Activated CD4-positive, alpha-beta T cell treated with anti-CD3 and anti-CD28 coated beads, Interleukin-2, amount 10 ng/mL, durations not matched to agents 24 days and 14 days (primary cell): ENCODE measurements at regions of chr16 and their contacts with region 1.

Region 1: DNA sequence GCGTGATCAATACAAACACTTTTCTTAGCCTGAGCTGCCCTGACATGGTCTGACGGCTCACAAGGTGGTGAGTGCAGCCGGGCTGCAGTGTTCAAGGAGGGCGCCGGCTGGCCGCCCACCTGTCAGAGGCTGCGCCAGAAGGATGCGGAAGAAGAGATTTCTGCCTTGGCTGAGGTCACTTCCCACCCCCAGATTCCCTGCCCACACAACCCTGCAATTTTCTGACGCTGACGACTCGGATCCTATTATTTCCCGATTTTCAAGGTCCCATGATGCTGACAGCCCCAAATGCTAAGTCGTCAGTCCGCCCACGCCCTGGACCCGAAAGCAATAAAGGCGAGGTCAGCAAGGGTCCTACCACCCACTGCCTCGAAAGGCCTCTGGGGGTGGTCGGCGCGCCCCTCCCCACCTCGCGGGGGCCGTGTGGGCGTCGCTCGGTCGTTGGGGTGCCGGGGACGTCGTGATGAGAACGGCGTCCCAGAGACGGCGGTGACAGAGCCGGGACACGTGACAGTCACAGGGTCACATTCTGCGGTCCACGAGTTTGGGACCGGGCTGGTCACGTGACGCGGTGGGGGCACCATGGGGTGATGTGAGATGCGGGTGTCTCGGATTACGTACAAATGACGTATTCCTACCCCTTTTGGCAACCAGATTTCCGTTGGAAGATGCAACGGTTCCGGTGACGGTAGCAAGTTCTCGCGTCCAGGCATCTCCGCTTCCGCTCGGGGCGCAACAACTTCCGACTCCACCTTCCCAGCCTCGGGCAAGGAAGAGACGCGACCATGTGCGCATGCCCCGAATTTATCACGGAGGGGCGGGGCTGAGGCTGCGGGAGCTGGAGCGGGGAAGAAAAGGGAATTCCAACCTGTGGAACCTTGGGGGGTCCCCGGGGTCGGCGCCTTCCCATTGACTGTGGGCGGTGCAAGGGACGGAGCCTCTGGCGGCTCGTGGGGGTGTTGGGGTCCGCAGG is at the start of gene STX4:
- DNase-seq: peak; percentile 99
- H3K4me3 Mint-ChIP-seq: peak within 1 kb of the TSS; percentile 93
- H3K27ac Mint-ChIP-seq: peak within 1 kb of the TSS; percentile 96
- H3K4me1 Mint-ChIP-seq: peaks cover 15% of the 10 kb centered on the region
- H3K27me3 Mint-ChIP-seq: no peaks in the 10 kb centered on the region
- total RNA-seq, gene STX4: 49.1 and 54.8 TPM in 2 replicates

Region 2: GRCh38 chr16:30767767-30768415 is 265.1 kb before region 1 on chr16:
- intact Hi-C with region 1: no loop called
- DNase-seq: no peak
- H3K4me3 Mint-ChIP-seq: no peak overlapping the region
- H3K27ac Mint-ChIP-seq: no peak overlapping the region
- H3K4me1 Mint-ChIP-seq: peaks cover 13% of the 10 kb centered on the region
- H3K27me3 Mint-ChIP-seq: no peaks in the 10 kb centered on the region

Region 3: DNA sequence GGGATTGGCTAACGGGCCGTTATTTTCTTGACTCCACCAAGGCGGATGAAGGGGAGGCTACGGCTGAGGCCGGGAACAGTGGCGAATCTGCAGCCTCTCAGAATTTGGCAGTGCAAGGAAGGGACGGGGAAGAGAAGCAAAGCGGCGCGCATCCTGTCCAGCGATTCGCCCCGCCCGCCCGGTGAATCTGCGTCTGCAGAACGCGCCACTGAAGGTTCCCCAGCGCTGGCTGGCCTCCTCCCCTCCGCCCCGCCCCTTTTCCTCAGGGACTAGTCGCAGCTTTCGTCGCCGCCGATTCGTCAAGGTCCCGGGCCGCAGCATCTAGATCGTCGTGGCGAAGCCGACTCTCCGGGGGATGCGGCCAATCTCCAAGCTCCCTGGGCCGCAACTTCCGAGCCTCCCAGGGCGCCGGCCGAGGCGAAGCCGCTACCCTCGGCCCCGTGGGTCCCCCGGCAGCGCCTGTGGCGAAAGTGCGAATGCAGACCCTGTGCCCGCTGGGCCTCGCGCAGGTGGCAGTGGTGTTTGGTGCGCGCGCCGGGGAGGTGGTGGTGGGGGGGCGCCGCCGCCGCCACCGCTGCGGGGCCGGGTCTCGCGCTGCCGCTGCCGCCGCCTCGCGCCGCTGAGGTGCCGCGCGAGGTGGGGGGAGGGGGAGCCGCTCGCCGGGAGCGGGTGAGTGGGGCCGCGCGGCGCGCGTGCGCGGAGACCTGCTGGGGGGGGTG is 75.4 kb before region 1 on chr16 and contains the start of gene SETD1A:
- intact Hi-C with region 1: loop called (anchors 1 kb)
- DNase-seq: peak; percentile 99
- H3K4me3 Mint-ChIP-seq: peak within 1 kb of the TSS; percentile 94
- H3K27ac Mint-ChIP-seq: peak within 1 kb of the TSS; percentile 99
- H3K4me1 Mint-ChIP-seq: peaks cover 32% of the 10 kb centered on the region
- H3K27me3 Mint-ChIP-seq: no peaks in the 10 kb centered on the region
- total RNA-seq, gene SETD1A: 30.7 and 31.5 TPM in 2 replicates

Region 4: GRCh38 chr16:30997000-30997886 is 35.8 kb before region 1 on chr16:
- intact Hi-C with region 1: loop called (anchors 1 kb)
- DNase-seq: peak; percentile 90
- H3K4me3 Mint-ChIP-seq: peak overlapping the region; percentile 85
- H3K27ac Mint-ChIP-seq: peak overlapping the region; percentile 71
- H3K4me1 Mint-ChIP-seq: peaks cover 7% of the 10 kb centered on the region
- H3K27me3 Mint-ChIP-seq: peaks cover 1% of the 10 kb centered on the region

Region 5: DNA sequence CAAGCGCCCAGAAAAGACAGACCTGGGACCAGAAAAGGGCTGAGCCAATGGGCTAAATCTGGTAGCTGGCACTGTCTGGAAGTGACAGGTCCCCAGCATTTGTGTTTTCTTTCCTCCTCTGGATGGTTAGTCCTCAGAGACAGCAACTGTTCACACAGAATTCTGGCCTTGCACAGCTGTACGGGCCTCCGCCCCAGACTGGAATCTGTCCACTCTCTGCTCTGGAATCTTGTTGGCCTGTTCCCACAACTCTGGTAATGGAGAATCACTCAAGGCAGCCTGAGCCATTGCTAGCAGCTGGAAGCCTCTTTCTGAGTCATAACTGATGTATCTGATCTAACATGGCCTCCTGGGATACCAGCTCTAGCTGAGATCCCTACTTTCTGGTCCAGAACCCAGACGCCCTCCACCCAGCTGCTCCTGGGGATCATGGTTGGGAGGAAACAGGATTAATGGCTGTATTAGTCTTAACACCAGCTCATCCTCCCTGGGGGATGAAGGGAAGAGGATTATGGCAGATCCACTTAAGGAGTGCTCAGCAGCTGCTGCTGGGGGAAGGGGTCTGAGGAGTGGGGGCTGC is 31.9 kb after region 1 on chr16:
- intact Hi-C with region 1: no loop called
- DNase-seq: peak; percentile 66
- H3K4me3 Mint-ChIP-seq: peak overlapping the region; percentile 82
- H3K27ac Mint-ChIP-seq: peak overlapping the region; percentile 86
- H3K4me1 Mint-ChIP-seq: peaks cover 47% of the 10 kb centered on the region
- H3K27me3 Mint-ChIP-seq: no peaks in the 10 kb centered on the region

Region 6: DNA sequence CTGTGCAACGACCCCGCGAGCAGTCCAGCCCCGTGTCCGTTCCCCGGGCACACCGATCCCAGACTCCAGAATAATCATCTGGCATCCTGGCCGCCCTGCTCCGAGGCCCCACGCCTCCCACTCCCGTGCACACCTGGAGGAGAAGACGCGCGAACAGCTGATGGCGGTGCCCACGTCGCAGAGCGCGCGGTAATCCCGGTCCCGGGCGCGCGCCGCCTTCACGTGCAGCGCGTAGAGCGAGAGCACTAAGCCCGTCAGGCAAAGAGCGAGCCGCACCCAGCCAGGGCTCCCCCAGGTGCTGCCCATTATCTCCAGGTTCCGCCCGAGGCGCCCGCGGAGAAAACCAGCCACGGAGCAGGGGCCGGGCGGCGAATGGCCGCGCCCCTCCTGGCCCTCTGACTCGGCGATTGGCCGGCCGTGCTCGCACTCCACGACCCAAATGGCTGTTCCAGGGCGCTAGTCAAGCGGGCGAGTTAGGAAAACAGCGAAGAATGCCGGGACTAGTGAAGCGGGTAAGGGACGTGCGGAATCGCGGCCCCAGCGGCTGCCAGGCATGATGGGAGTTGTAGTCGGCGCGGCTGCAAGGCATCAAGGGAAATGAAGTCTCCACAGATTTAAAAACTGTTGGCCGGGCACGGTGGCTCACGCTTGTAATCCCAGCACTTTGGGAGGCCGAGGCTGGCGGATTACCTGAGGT is 61.5 kb after region 1 on chr16 and contains the start of gene VKORC1:
- intact Hi-C with region 1: loop called (anchors 1 kb)
- DNase-seq: peak; percentile 96
- H3K4me3 Mint-ChIP-seq: peak within 1 kb of the TSS; percentile 95
- H3K27ac Mint-ChIP-seq: peak within 1 kb of the TSS; percentile 94
- H3K4me1 Mint-ChIP-seq: peaks cover 23% of the 10 kb centered on the region
- H3K27me3 Mint-ChIP-seq: no peaks in the 10 kb centered on the region
- total RNA-seq, gene VKORC1: 56.2 and 59.1 TPM in 2 replicates

Region 7: GRCh38 chr16:31117391-31118197 is 84.6 kb after region 1 on chr16 and contains the start of gene KAT8:
- intact Hi-C with region 1: loop called (anchors 1 kb)
- DNase-seq: peak; percentile 99
- H3K4me3 Mint-ChIP-seq: peak within 1 kb of the TSS; percentile 88
- H3K27ac Mint-ChIP-seq: peak within 1 kb of the TSS; percentile 89
- H3K4me1 Mint-ChIP-seq: peaks cover 11% of the 10 kb centered on the region
- H3K27me3 Mint-ChIP-seq: no peaks in the 10 kb centered on the region
- total RNA-seq, gene KAT8: 56.9 and 63.3 TPM in 2 replicates

Region 8: DNA sequence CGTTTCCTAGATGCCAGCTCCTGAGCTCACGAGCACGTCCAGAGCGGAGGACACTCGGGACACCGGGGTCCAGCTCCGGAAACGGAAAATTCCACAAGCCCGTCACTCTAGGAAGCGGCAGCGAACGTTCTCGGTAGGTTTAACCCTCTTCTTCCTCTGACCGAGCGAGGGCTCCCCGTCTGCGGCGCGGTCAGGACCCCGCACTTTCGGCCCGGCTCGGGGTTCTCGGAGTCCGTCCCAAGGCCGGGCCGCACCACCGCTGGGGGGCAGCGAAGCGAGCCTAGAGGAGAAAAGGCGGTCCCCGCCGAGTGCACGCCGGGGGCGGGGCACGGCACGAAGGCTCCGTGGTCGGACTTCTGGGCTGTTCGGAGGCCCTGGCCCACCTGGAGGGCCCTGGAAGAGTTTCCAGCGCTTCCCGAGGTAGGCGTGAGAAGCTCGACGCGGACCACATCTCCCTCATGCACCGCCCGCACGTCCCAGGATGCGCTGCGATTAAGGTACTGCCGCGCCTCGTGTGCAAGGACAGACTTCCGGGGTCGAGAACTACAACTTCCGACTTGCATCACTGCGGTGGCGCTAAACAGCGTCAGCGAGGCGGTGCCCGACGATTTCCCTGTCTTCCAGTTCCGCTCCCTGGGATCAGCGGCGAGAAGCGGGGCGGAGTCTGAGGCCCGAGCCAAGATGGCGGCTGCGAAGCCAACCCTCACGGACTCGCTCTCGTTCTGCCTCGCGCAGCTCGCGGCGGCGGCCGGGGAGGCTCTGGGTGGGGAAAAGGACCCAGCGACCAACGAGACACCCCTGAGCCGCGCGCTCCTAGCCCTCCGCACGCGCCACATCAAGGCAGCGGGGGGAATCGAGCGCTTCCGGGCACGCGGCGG is 426.1 kb after region 1 on chr16 and contains the start of gene ARMC5:
- intact Hi-C with region 1: loop called (anchors 1 kb)
- DNase-seq: peak; percentile 99
- H3K4me3 Mint-ChIP-seq: peak within 1 kb of the TSS; percentile 95
- H3K27ac Mint-ChIP-seq: peak within 1 kb of the TSS; percentile 98
- H3K4me1 Mint-ChIP-seq: peaks cover 30% of the 10 kb centered on the region
- H3K27me3 Mint-ChIP-seq: no peaks in the 10 kb centered on the region
- total RNA-seq, gene ARMC5: 9.9 and 10.5 TPM in 2 replicates